ENCODE measurements at regions of chr20 and their contacts with region 1.

Region 1: DNA sequence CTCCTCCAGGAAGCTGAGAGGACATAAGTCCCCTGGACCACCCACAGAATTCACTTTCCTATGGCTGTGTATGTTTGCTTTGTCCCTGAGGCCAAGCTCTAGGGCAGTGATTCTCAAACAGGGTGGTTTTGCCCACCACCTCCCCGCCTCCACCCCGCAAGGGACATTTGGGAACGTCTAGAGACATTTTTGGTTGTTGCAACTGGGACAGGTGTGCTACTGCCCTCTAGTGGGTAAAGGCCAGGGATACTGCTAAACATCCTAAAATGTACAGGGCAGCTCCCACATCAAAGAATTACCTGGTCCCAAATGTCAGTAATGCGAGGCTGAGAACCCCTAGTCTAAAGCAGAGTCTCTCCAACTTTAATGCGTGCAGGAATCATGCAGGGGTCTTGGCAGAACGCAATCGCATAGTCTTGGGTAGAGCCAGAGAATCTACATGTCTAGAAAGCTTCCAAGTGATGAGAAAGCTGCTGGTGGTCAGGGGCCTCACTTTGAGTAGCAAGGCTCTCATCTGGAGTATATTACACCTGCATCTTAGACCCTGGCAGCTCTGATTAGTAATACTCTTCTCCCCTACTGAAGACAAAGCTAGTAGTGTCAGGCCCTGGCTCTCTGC is 5.1 kb downstream of the KCNS1 start:
- DNase-seq: peak in 40 of 42 donors; percentile 28 to 88 (median 66)

Region 2: DNA sequence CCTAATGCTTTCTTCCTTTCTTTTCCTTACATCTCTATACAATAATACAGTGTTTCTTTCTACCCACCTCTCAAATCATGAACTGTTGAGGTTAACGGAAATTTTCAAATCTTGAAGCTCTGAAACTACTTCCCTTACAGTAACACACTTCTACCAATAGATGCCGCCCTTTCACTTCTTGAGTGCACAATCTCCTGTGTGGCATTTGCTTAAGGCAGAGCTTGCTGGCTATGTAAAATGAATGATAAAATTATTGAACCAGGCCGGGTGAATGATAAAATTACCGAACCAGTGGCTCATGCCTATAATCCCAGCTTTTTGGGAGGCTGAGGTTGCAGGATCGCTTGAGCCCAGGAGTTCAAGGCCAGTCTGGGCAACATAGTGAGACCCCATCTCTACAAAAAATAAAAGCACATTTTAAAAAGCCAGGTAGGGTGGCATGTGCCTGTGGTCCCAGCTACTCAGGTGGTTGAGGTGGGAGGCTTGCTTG is 51.7 kb before region 1 on chr20:
- intact Hi-C with region 1: loop called (anchors 5 kb)
- DNase-seq: peak in 24 of 42 donors; percentile 19 to 83 (median 58)

Region 3: GRCh38 chr20:45268531-45268930 is 172.7 kb after region 1 on chr20:
- intact Hi-C with region 1: no loop called
- DNase-seq: peak in 1 of 42 donors; percentile 7

Region 4: DNA sequence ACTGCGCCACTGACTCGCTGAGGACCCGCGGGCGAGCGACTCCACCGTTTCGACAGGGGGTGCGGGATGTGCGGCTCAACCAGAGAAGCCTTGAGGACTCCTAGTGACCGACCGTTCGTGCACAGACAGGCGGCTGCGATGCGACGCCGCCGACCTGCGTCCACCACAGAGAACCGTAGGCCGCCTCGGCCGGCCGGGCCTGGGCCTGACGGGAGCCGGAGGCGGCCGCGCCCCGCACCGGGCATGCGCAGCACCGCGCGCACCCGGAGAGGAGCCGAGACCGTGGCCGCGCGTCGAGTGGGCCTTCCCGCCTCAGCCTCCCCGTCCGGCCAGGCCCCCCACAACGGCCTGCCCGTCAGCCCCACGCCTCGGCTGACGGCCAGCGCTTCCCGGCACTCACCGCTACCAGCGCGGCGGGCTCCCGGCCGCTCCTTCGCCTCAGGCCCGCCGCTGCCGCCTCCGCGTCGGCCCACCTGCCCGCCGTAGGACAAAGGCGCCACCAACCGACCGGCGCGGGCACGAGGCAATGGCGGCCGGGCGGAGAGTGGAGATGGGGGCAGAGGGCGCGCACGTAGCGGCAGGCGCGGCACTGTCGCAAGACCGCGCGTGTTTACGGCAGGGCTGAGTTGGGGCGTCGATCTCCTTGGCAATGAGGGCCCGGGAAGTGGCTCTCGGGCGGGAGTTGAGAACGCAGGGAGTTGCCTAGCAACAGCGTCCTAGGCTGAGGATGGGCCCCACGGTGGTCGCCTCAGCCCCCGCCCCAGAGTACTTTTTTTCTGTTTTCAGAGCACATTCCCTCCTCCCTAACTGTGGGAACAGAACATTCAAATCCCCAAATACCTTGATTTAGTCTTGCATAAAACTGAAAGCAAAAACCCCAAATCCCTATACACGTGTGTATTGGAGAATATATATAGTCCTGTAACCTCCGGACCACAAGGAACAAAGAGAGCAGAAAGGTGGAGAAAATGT is 993.8 kb after region 1 on chr20 and contains the start of gene NCOA5:
- intact Hi-C with region 1: no loop called
- DNase-seq: peak; percentile 92 to 99 (median 97)

Measured in head of caudate nucleus (tissue), 42 donors.